Calu3 (cell line): ENCODE measurements at regions of chr6 and their contacts with region 1.

Region 1: DNA sequence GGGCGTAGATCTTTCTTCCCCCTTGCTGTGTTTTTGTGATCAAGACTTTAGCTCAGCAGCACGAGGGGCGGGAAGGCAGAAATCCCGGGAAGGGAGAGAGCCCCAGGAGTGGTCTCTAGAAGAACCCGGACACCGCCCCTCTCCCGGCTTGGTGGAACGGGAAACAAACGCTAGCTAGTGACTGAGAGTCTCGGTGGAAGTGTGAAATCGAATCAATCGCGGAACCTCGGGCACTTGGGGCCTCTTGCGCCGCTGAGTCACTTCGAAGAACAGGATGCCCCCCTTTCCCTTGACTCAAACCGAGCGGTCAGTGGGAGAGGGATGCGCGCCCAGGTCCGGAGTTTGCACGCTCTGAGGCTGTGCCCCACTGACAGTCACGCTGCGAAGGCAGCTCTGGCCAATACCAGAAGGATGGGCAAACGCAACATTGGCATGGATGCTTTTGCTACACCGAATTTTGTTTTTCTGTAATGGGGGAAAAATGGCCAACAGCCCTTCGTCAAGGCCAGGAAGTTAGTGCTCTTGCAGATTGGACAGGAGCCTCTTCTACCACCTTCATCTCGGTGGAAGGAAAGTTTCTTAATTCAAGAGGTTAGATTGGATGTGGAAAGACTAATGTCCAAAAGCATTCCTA is 1.6 kb upstream of the OLIG3 start:
- DNase-seq: no peak
- H3K4me3 Mint-ChIP-seq: no peak overlapping the region
- H3K27ac Mint-ChIP-seq: no peak overlapping the region
- H3K4me1 Mint-ChIP-seq: no peaks in the 10 kb centered on the region
- H3K27me3 Mint-ChIP-seq: peaks cover 52% of the 10 kb centered on the region
- CTCF ChIP-seq: no peak

Region 2: DNA sequence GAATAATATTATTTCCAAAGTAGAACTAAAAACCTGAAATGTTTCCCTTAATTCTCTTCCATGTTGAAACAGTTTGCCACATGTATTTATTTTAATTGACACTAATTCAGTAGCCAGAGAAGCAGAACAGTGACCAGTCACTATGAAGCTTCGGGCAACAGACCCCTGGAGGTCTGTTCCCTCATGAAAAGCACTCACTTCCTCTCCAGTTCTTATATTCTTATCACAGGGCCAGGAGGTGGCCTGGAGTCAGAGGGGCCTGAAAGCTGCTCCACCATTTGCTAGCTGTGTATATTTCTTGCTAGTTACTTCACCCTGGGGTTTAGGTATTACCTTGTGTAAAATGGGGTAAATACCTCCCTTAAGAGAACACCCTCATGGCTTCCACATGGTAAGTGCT is 994.7 kb before region 1 on chr6:
- CTCF ChIA-PET with region 1: interaction called, 11 read pairs
- intact Hi-C with region 1: no loop called
- DNase-seq: no peak
- H3K4me3 Mint-ChIP-seq: no peak overlapping the region
- H3K27ac Mint-ChIP-seq: no peak overlapping the region
- H3K4me1 Mint-ChIP-seq: peaks cover 4% of the 10 kb centered on the region
- H3K27me3 Mint-ChIP-seq: no peaks in the 10 kb centered on the region
- CTCF ChIP-seq: no peak

Region 3: GRCh38 chr6:137510923-137511322 is 15.1 kb after region 1 on chr6:
- CTCF ChIA-PET with region 1: no interaction called
- intact Hi-C with region 1: no loop called
- DNase-seq: no peak
- H3K4me3 Mint-ChIP-seq: no peak overlapping the region
- H3K27ac Mint-ChIP-seq: no peak overlapping the region
- H3K4me1 Mint-ChIP-seq: no peaks in the 10 kb centered on the region
- H3K27me3 Mint-ChIP-seq: peaks cover 64% of the 10 kb centered on the region
- CTCF ChIP-seq: no peak

Region 4: DNA sequence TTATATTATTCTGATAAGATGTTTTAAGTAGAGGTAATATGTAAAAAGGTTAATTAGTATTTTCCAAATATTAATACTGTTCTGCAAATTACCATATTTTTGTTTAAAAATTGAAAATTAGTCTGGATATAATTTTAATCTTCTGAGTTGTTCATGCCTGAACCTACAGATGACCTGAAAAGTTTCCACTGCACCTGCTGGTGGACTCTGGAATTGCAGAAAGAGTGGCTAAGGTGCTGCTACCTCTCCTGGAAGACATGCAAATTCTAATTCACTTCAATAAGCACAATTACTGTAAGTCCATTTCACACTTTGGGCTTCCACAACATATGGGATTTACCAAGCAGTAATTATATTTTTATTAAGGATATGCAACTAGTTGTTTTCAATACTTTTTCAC is 76.0 kb after region 1 on chr6:
- CTCF ChIA-PET with region 1: no interaction called
- intact Hi-C with region 1: no loop called
- DNase-seq: peak; percentile 54
- H3K4me3 Mint-ChIP-seq: no peak overlapping the region
- H3K27ac Mint-ChIP-seq: no peak overlapping the region
- H3K4me1 Mint-ChIP-seq: no peaks in the 10 kb centered on the region
- H3K27me3 Mint-ChIP-seq: peaks cover 66% of the 10 kb centered on the region
- CTCF ChIP-seq: peak; percentile 57